ENCODE measurements at regions of chr6 and their contacts with region 1.

Region 1: DNA sequence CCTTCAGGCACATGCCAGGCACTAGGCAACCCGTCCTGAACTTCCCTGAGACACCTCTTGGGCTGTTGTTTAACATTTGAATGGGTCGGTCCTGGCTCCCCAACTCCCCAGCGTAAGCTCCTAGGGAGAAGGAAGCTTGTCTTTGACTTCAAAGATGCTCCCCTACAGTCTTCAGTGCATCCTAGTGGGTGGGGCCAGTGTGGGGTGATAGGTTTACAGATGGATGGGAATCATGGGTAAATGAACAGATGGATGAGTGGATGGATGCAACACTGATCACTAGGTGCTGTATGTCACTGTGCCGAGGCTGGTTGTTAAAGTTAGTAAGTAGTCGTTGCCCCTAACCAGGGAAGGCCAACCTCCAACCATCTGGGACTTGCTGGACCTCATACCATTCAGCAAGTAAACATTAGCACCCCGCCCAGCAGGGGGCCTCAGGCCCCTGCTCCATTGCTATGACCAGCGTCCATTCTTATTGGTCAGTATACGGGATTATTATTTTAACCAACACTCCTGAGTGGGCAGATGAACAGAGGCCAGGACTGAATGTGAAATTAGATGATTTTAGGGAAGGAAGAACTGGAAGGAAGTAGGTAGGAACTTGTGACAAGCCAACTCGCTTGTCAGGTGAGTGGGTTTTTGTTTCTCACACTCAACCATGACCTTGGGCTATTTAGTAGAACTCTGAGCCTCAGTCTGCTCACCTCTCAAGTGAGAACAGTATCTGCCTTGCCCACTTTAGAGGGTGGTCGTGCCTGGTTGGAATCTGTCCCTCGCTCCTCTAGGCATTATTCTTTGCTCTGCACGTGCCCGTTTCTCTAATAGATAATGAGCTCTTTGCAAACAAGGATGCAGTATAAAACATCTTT is 82.9 kb upstream of the FOXP4 start:
- DNase-seq: peak; percentile 58
- ATAC-seq: peak; percentile 70
- H3K4me3 Mint-ChIP-seq: no peak overlapping the region
- H3K27ac Mint-ChIP-seq: no peak overlapping the region
- H3K4me1 Mint-ChIP-seq: no peaks in the 10 kb centered on the region
- H3K27me3 Mint-ChIP-seq: peaks cover 24% of the 10 kb centered on the region
- CTCF ChIP-seq: peak; percentile 53

Region 2: DNA sequence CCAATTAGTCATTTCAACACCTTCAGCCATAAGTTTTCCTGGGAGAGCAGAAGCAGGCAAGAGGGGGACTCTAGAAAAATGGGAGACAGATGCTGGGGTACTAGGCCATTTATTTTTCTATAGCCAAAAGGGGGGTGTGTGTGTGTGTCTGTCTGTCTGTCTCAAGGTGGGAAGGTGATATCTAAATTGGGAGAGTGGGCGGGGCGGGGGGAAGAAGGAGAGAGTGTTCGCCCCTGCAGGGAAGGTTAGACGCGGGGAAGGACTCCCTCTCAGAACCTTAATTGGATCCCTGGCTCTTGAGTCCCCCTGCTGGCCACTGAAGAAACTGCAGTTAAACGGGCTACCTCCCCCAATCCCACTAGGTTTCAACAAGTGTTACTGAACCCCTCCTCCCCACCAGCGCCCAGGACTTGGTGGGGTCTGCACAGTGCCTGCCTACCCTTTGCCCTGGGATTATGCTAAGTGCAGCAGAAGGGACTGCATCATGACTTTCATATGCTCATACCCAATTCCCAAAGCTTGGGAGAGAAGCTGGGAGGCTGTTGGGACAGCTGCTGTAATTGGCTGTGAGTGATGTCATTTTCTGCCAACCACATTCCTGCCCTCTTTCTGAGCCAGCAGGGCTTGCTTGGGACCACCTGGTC is 128.7 kb after region 1 on chr6:
- CTCF ChIA-PET with region 1: interaction called, 8 read pairs
- POLR2A ChIA-PET with region 1: no interaction called
- intact Hi-C with region 1: loop called (anchors 5 kb)
- DNase-seq: peak; percentile 85
- ATAC-seq: peak; percentile 97
- H3K4me3 Mint-ChIP-seq: no peak overlapping the region
- H3K27ac Mint-ChIP-seq: no peak overlapping the region
- H3K4me1 Mint-ChIP-seq: peaks cover 2% of the 10 kb centered on the region
- H3K27me3 Mint-ChIP-seq: no peaks in the 10 kb centered on the region
- CTCF ChIP-seq: peak; percentile 90